ENCODE measurements at regions of chr6 and their contacts with region 1.

Region 1: DNA sequence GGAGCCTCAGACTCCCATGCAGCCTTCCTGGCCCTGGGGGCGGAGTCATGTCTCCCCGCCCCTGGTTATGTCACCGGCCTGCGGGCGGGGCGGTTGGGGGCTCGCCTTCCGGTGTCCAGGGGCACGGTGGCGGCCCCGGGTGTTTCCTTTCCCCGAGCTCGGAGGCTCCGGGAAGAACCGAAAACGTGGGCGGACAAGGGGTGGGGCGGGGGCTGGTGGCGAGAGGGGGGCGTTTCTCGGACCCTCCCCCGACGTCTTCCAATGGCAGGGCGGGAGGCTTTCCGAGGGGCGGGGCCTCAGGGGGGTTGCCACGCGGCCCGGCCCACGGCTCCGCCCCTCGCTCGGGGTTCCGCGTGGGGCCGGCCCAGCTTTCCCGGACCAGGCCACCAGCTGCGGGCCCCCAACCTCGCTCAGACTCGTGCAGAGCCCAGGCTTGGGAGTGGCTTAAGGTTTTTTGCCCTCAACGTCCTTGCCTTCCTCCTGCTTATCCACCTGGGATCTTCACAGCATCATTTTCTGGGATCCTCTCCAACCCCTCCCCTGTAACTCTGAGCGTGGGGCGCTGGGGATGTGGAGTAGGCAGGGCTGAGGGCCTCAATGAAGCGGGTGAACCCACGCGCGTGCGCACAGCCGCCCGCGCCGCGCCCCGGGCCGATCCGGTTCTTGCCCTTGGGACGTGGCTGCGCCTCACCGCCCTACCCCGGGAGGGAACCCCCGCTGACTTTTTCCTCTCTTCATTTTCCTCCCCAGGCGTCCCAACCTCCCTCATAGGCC is 2.1 kb upstream of the NRN1 start:
- DNase-seq: peak; percentile 96
- H3K4me3 ChIP-seq: peak overlapping the region; percentile 66
- H3K27ac ChIP-seq: peak overlapping the region; percentile 90
- H3K4me1 ChIP-seq: peaks cover 13% of the 10 kb centered on the region
- H3K27me3 ChIP-seq: no peaks in the 10 kb centered on the region
- CTCF ChIP-seq: no peak

Region 2: DNA sequence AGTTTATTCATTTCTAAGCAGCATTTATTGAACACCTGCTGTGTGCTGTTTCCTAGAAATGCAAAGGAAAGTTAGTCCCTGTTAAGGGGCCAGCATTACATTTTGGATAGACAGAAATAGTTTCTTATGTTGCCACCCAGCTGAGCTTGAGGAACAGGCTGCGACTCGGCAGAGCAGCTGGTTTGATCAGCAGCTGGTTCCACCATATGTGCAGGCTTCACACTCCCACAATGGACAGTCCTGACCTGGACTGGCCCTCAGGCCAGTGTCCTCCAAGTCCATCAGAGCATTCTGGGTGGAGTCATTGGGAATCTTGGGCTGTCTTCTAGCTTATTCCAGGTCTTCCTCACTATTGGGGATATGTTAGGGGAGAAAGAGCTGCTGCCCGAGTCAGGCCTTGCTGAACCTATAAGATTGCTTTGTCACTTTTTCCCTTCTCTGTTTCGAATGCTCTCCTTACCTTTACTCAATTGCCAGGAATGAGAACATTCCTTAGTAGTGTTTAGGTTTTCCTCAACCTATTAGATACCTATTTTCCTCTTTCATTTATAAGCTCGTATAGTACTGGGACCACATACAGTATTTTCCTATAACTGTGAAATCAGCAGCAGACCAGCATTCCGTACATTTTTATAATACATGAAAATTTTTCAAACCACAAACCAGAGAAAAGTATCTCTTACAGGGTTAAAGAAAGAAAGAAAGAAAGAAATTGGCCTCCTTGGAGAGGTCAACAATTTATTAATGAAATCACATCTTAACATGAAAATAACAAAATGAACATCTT is 544.5 kb before region 1 on chr6:
- CTCF ChIA-PET with region 1: interaction called, 13 read pairs
- POLR2A ChIA-PET with region 1: no interaction called
- intact Hi-C with region 1: no loop called
- DNase-seq: peak; percentile 7
- H3K4me3 ChIP-seq: no peak overlapping the region
- H3K27ac ChIP-seq: no peak overlapping the region
- H3K4me1 ChIP-seq: peaks cover 18% of the 10 kb centered on the region
- H3K27me3 ChIP-seq: no peaks in the 10 kb centered on the region
- CTCF ChIP-seq: no peak

Region 3: DNA sequence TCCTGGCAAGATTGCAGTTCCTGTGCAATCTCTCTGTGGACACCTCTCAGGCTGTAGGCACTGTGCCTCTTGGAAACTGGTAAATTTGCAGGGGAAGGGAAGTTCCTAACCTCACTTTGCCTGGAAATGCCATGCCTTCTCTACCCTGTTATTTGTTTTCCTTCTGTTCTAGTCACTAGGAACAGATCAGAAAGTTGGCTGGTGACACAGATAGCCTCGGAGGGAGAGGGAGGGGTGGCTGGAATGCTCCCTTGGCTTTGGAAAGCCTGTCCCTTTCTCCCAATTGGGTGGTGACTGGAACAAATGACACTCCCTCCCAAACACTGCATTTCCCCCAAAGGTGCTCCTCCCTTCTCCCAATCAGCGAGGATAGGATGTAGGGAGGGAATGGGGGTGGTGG is 443.2 kb after region 1 on chr6:
- CTCF ChIA-PET with region 1: no interaction called
- POLR2A ChIA-PET with region 1: no interaction called
- intact Hi-C with region 1: no loop called
- DNase-seq: no peak
- H3K4me3 ChIP-seq: no peak overlapping the region
- H3K27ac ChIP-seq: no peak overlapping the region
- H3K4me1 ChIP-seq: no peaks in the 10 kb centered on the region
- H3K27me3 ChIP-seq: no peaks in the 10 kb centered on the region
- CTCF ChIP-seq: no peak

Region 4: DNA sequence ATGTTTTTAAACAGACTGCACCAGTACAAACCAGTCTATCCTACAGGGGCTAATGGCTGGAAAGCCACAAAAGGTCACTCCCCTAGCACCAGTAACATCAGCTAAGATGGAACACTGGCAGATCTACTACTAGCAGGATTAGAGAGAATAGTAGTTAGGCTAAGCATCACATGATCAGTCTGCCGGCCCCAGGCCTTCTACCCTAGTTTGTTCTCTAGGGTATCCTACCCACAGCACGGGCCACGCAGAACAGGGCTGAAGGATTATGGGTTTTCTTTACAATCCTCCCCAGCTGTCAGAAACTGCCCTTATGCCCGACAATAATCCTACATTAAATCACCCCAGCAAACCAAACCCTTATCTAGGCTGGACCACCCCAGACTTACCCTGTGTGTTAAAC is 735.7 kb after region 1 on chr6:
- CTCF ChIA-PET with region 1: no interaction called
- POLR2A ChIA-PET with region 1: interaction called, 17 read pairs
- intact Hi-C with region 1: no loop called
- DNase-seq: no peak
- H3K4me3 ChIP-seq: no peak overlapping the region
- H3K27ac ChIP-seq: no peak overlapping the region
- H3K4me1 ChIP-seq: peaks cover 23% of the 10 kb centered on the region
- H3K27me3 ChIP-seq: no peaks in the 10 kb centered on the region
- CTCF ChIP-seq: no peak

Measured in A673 (cell line).